Panc1 (cell line): ENCODE measurements at regions of chr10 and their contacts with region 1.

Region 1: GRCh38 chr10:43195557-43195956 is 57.3 kb downstream of the CSGALNACT2 start:
- DNase-seq: no peak
- ATAC-seq: no peak
- H3K4me3 ChIP-seq: no peak overlapping the region
- H3K27ac ChIP-seq: no peak overlapping the region
- H3K4me1 ChIP-seq: no peaks in the 10 kb centered on the region
- H3K27me3 ChIP-seq: no peaks in the 10 kb centered on the region
- CTCF ChIP-seq: no peak

Region 2: GRCh38 chr10:43177595-43177994 is 18.0 kb before region 1 on chr10:
- CTCF ChIA-PET with region 1: no interaction called
- POLR2A ChIA-PET with region 1: no interaction called
- in situ Hi-C with region 1: no loop called
- intact Hi-C with region 1: loop called (anchors 1 kb)
- DNase-seq: no peak
- ATAC-seq: no peak
- H3K4me3 ChIP-seq: no peak overlapping the region
- H3K27ac ChIP-seq: no peak overlapping the region
- H3K4me1 ChIP-seq: no peaks in the 10 kb centered on the region
- H3K27me3 ChIP-seq: no peaks in the 10 kb centered on the region
- CTCF ChIP-seq: no peak